KBM-7 (cell line): ENCODE measurements at regions of chr7 and their contacts with region 1.

Region 1: DNA sequence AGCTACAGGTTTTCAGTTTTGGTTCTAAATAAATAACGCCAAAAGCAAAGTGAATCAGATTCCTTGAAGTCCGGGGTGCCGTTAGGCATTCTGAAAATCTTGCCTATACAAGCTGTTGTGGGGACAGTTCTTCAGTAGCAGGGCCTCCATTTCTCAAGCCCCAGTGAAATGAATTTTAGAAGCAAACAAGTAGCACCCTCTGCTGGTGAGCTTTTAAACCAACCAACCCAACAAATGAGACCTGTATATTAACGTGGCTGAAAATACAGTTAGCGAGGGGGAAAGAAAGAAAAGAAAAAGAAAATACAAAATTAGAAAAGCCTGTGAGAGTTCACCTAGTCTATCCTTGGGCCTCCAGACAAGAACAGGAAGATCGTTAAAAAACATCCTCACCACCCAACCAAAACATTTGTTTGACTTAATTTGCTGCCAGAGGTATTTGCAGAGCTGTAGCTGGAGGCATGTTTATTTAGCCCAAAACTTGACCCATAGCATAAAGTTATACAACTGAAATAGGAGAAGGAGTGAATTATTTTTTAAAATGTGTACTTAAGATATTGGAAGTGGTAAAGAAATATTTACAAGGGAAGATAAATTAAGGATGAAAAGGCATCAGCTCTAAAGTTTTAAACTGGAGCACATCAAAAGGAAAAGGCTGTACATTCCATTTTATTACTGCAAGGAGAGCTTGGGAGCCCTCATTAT is 98.9 kb downstream of the DYNC1I1 start:
- DNase-seq: peak; percentile 65

Region 2: GRCh38 chr7:95725205-95725604 is 146.0 kb before region 1 on chr7:
- in situ Hi-C with region 1: loop called (anchors 25 kb)
- DNase-seq: peak; percentile 7

Region 3: DNA sequence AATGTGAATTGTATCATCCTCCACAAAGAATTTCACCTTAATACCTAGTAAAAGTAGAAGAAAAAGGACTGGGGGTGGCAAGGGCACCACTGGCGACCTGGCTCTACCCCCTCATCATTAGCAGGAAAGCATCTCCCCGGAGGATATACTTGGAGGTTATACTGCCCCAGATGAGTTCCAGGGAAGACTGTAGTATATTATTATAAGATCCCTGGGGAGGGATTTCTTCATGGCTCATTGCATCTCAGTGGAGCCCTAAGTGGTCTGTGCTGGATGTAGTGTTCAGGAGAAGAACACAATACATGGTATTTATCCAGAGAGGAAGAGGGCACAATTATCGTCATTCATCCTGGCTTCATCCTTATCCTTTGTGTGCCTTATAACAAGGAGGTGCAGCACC is 113.0 kb before region 1 on chr7:
- in situ Hi-C with region 1: no loop called
- DNase-seq: no peak